Heart left ventricle (tissue), 16 donors: ENCODE measurements at regions of chr2 and their contacts with region 1.

Region 1: DNA sequence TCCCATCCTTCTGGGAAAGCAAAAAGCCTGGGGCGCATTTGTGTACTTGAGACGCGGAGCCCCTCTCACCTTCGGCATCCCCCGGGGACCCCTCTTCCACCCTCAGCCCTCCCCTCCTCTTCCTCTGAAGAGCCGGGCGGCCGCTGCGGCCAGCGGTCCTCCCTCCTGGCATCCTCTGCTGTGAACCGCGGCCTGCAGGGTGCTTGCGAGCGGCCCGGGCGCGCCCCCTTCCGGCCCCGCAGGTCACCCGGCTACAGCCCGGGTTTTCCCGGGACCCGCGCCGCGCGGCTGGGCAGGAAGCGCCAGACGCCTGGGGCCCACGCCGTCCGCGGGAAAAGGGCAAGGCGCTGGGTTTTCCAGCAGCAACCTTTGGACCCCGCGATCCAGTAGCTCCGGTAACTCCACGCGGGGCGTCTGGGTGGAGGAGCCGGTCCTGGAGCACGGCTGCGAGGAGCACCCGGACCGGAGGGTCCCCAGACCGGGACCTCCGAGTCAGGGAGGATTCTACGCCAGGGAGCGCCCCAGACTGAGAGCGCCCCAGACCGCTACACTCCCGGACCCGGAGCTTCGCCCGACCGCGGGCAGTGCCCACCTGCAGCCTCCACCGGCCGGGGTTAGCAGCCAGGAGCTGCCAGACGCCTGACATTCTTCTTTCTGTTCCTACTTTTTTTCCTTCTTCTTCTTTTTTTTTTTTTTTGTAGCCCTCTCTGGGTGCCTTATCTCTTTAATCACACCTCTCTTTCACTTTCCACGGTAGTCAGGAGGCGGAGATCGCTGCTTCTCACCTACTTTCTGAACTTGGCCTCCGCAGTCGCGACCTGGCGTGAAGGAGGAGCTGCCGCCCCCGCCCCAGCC is at the start of gene IL18R1:
- DNase-seq: peak; percentile 79 to 91 (median 84)
- ATAC-seq: peak; percentile 89 to 100 (median 98)
- H3K4me3 ChIP-seq: peak within 1 kb of the TSS; percentile 45 to 82 (median 74)
- H3K27ac ChIP-seq: peak within 1 kb of the TSS in 10 of 12 donors; percentile 12 to 89 (median 66)
- H3K4me1 ChIP-seq: peaks cover 0 to 28% (median 2%) of the 10 kb centered on the region in 12 donors
- H3K27me3 ChIP-seq: peaks cover 0 to 4% (median 0%) of the 10 kb centered on the region in 9 donors
- CTCF ChIP-seq: peak; percentile 76 to 96 (median 86)
- POLR2A ChIP-seq: peak in 1 of 2 donors; percentile 37
- total RNA-seq, gene IL18R1: 0.50 to 4.3 (median 1.8) TPM

Region 2: DNA sequence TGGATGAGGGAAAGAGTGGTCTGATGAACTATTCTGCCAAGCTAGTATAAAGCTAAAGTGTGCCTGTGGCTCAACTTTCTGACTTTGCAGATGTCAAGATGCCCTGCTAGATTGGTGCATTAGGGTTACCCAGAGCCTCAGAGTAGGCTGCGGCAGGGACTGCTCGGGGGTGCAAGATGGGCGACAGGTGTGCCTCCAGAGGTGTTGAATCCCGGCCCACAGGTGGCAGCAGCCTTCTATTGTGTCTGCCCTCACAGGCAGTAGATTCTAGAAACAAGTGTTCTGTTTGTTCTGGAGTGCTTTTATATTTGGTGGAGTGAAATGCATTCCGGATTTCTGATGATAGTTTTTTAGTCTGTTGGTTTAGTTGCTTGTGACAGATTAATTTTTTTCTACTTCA is 495.6 kb before region 1 on chr2:
- intact Hi-C with region 1: loop called in 1 of 10 experiments (anchors 10 kb)
- DNase-seq: no peak
- ATAC-seq: no peak
- H3K4me3 ChIP-seq: no peak overlapping the region
- H3K27ac ChIP-seq: no peak overlapping the region
- H3K4me1 ChIP-seq: peaks cover 0 to 15% (median 6%) of the 10 kb centered on the region in 12 donors
- H3K27me3 ChIP-seq: no peaks in the 10 kb centered on the region
- CTCF ChIP-seq: no peak
- POLR2A ChIP-seq: no peak

Region 3: DNA sequence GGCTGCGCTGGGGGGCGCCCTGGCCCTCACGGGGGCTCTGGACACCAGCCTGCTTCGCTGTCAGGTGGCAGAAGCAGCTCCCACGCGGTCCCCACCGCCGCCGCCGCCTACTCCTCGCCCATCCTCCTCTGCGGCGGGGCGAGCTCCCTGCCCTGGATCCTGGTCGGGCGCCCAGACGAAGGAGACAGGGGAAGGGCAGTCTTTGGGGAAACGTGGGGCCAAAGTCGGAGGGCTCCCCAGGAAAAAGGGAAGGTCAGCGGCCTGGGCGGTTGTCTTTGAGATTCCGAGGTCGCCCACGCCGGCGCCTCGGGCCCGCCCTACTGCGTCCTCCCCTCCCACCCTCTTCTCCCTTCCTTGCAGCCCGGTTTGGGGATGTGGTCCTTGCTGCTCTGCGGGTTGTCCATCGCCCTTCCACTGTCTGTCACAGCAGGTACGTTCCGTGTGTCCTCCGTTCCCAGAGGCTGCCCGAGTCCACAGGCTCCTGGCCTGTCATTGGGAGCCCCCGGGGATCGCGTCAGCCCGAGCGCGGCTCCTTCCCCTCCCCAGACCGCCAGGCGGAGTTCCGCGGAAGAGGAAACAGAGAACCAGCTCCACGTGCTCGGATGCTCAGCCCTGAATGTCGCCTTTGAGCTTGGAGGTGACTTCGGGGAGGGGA is 168.1 kb before region 1 on chr2:
- intact Hi-C with region 1: loop called in 1 of 10 experiments (anchors 10 kb)
- DNase-seq: peak; percentile 61 to 83 (median 62)
- ATAC-seq: peak; percentile 62 to 92 (median 86)
- H3K4me3 ChIP-seq: peak overlapping the region; percentile 22 to 64 (median 55)
- H3K27ac ChIP-seq: peak overlapping the region in 9 of 12 donors; percentile 23 to 70 (median 54)
- H3K4me1 ChIP-seq: peaks cover 0 to 24% (median 5%) of the 10 kb centered on the region in 12 donors
- H3K27me3 ChIP-seq: peaks cover 0 to 2% (median 0%) of the 10 kb centered on the region in 9 donors
- CTCF ChIP-seq: peak in 9 of 12 donors; percentile 21 to 53 (median 27)
- POLR2A ChIP-seq: peak in 1 of 2 donors; percentile 16

Region 4: GRCh38 chr2:102251042-102251848 is 104.5 kb before region 1 on chr2:
- intact Hi-C with region 1: loop called in 5 of 10 experiments (anchors 2 to 5 kb)
- DNase-seq: peak; percentile 51 to 81 (median 63)
- ATAC-seq: peak; percentile 63 to 86 (median 78)
- H3K4me3 ChIP-seq: peak overlapping the region in 11 of 12 donors; percentile 25 to 61 (median 45)
- H3K27ac ChIP-seq: peak overlapping the region in 3 of 12 donors; percentile 15 to 74 (median 45)
- H3K4me1 ChIP-seq: peaks cover 0 to 29% (median 7%) of the 10 kb centered on the region in 12 donors
- H3K27me3 ChIP-seq: peaks cover 0 to 19% (median 3%) of the 10 kb centered on the region in 9 donors
- CTCF ChIP-seq: peak; percentile 53 to 78 (median 66)
- POLR2A ChIP-seq: no peak

Region 5: GRCh38 chr2:102449370-102449974 is 93.7 kb after region 1 on chr2:
- intact Hi-C with region 1: loop called in 2 of 10 experiments (anchors 5 kb)
- DNase-seq: peak in 3 of 5 donors; percentile 11 to 31 (median 27)
- ATAC-seq: no peak
- H3K4me3 ChIP-seq: no peak overlapping the region
- H3K27ac ChIP-seq: no peak overlapping the region
- H3K4me1 ChIP-seq: no peaks in the 10 kb centered on the region
- H3K27me3 ChIP-seq: no peaks in the 10 kb centered on the region
- CTCF ChIP-seq: peak; percentile 47 to 77 (median 62)
- POLR2A ChIP-seq: no peak